BJ (cell line): ENCODE measurements at regions of chr22 and their contacts with region 1.

Region 1: GRCh38 chr22:22848364-22848866 is 39.2 kb upstream of the IGLL5 start:
- DNase-seq: no peak
- H3K4me3 ChIP-seq: no peak overlapping the region
- H3K27me3 ChIP-seq: peaks cover 1% of the 10 kb centered on the region; the same call in 1 of the 2 replicates
- CTCF ChIP-seq: peak; percentile 97

Region 2: GRCh38 chr22:22710719-22711531 is 137.5 kb before region 1 on chr22:
- CTCF ChIA-PET with region 1: no interaction called
- POLR2A ChIA-PET with region 1: no interaction called
- DNase-seq: no peak
- H3K4me3 ChIP-seq: no peak overlapping the region
- H3K27me3 ChIP-seq: no peaks in the 10 kb centered on the region; the same call in 1 of the 2 replicates
- CTCF ChIP-seq: peak; percentile 98

Region 3: DNA sequence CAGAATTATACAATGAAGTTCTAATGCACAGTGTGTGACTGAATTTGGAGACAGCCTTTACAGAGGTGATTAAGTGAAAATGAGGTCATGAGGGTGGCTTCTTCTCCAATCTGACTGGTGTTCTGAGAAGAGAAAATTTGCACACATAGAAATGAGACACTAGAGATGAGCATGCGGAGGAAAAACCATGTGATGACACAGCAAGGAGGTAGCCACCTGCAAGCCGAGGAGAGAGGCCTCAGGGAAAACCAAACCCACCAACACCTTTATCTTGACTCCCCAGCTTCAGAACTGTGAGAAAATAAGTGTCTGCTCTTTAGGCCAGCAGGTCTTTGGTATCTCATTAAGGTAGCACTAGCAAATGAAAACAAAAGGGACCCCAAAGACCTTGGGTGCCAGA is 110.8 kb before region 1 on chr22:
- CTCF ChIA-PET with region 1: no interaction called
- POLR2A ChIA-PET with region 1: no interaction called
- DNase-seq: no peak
- H3K4me3 ChIP-seq: no peak overlapping the region
- H3K27me3 ChIP-seq: peaks cover 3% of the 10 kb centered on the region; the same call in 1 of the 2 replicates
- CTCF ChIP-seq: no peak

Region 4: GRCh38 chr22:22753526-22754267 is 94.7 kb before region 1 on chr22:
- CTCF ChIA-PET with region 1: no interaction called
- POLR2A ChIA-PET with region 1: no interaction called
- DNase-seq: no peak
- H3K4me3 ChIP-seq: no peak overlapping the region
- H3K27me3 ChIP-seq: no peaks in the 10 kb centered on the region
- CTCF ChIP-seq: peak; percentile 69

Region 5: DNA sequence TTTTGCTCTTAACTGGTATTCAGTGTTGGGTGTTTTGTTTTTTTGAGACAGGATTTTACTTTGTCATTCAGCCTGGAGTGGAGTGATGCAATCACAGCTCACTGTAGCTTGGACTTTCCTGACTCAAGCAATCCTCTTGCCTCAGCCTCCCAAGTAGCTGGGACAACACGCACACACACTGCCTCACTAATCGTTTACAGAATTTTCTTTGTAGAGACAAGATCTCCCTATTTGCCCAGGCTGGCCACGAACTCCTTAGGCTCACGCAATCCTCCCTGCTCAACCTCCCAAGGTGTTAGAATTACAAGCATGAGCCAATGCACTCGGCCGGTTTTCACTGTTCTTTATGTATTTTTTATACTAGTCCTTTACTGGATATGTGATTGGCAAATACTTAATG is 11.8 kb before region 1 on chr22:
- CTCF ChIA-PET with region 1: interaction called, 26 read pairs
- POLR2A ChIA-PET with region 1: no interaction called
- DNase-seq: no peak
- H3K4me3 ChIP-seq: no peak overlapping the region
- H3K27me3 ChIP-seq: 0 out of 2 replicates have a peak, but pooled peaks cover 1% of the 10 kb centered on the region
- CTCF ChIP-seq: no peak

Region 6: DNA sequence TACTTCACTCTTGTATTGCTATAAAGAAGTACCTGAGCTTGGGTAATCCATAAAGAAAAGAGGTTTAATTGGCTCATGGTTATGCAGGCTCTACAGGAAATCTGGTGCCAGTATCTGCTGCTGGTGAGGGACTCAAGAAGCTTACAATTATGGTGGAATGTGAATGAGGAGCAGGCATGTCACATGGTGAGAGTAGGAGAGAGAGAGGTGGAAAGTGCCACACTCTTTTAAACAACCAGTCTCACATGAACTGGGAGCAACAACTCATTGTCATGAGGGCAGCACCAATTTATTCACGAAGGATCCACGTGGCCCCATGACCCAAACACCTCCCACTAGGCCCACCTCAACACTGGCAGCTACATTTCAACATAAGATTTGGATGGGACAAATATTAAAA is 14.6 kb after region 1 on chr22:
- CTCF ChIA-PET with region 1: interaction called, 23 read pairs
- POLR2A ChIA-PET with region 1: no interaction called
- DNase-seq: no peak
- H3K4me3 ChIP-seq: no peak overlapping the region
- H3K27me3 ChIP-seq: peaks cover 3% of the 10 kb centered on the region
- CTCF ChIP-seq: no peak

Region 7: DNA sequence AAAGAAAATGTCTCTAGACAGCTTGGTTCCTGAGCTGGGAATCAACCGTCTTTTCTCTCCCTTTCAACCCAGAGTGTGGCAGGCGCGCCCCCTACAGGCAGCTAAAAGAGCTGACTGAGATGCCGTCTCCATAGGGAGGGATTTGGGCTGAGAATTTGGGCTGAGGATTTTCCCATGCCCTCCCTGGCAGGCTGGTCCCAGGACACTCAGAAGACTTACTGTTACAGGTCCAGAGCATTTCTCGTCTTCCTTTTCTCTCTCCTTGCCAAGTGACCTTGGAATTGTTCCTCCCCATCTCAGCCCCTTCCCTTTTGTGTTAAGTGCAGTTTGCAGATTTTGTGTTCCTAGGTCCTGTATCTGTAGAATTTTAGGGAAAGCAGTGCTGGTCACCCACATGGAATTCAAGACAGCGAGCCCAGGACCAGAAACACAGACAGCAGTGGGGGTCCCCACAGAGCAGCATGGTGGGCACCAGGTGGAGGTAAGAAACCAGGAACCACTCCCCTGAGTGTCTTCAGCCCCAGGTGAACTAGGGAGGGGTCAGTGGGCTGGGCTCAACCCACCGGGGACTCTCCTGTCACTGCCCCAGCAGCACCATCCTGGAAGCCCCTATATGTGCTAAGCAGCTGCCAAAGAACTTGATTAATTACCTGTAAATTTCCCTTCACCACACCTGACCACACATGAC is 29.3 kb after region 1 on chr22:
- CTCF ChIA-PET with region 1: interaction called, 35 read pairs
- POLR2A ChIA-PET with region 1: no interaction called
- DNase-seq: no peak
- H3K4me3 ChIP-seq: no peak overlapping the region
- H3K27me3 ChIP-seq: no peaks in the 10 kb centered on the region; the same call in 1 of the 2 replicates
- CTCF ChIP-seq: peak; percentile 79

Region 8: DNA sequence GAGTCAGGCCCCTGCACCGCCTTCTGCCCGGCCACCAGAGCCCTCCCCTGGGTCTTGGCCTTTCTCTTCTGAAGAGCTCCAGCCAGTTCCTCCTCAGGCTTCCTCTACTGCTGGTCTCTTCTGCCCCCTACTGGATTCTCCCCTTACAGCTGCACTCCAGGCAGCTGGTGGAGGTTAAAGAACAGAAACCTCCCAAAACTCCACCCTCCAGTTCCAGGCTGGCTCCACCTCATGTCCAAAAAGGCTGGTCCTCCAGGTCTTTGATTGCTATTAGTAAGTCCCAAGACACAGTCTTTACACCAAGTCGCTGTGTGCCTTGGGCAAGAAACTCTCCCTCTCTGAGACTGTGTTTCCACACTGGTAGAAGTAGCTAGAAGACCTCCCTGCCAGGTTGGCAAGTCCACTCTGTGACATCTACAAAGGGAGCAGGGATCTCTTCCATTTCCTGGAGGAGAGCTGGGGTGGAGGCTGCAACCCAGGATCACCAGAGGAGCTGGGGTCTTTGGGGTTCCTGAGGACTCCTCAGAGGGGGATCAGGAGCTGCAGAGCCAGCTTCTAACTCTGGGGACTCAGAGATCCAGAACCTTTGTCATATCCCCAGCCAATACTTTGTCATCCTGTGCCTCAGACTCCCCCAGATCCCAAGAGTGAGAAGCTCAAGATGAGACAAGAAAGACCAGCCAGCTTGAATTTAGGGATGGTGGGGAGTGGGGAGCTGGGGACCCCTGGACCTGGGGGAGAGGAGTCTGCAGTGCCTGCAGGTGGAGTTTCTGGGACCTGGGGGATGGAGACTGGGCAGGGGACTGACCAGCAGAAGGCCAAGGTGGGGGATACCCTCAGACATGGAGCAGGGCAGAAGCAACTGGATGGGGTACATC is 35.8 kb after region 1 on chr22:
- CTCF ChIA-PET with region 1: interaction called, 35 read pairs
- POLR2A ChIA-PET with region 1: no interaction called
- DNase-seq: no peak
- H3K4me3 ChIP-seq: no peak overlapping the region
- H3K27me3 ChIP-seq: no peaks in the 10 kb centered on the region; the same call in 1 of the 2 replicates
- CTCF ChIP-seq: peak; percentile 57

Region 9: GRCh38 chr22:22928666-22929380 is 80.4 kb after region 1 on chr22:
- CTCF ChIA-PET with region 1: no interaction called
- POLR2A ChIA-PET with region 1: no interaction called
- DNase-seq: no peak
- H3K4me3 ChIP-seq: no peak overlapping the region
- H3K27me3 ChIP-seq: no peaks in the 10 kb centered on the region
- CTCF ChIP-seq: no peak

Region 10: GRCh38 chr22:22948651-22949571 is 100.5 kb after region 1 on chr22:
- CTCF ChIA-PET with region 1: interaction called, 231 read pairs
- POLR2A ChIA-PET with region 1: no interaction called
- DNase-seq: no peak
- H3K4me3 ChIP-seq: no peak overlapping the region
- H3K27me3 ChIP-seq: no peaks in the 10 kb centered on the region
- CTCF ChIP-seq: no peak

Region 11: DNA sequence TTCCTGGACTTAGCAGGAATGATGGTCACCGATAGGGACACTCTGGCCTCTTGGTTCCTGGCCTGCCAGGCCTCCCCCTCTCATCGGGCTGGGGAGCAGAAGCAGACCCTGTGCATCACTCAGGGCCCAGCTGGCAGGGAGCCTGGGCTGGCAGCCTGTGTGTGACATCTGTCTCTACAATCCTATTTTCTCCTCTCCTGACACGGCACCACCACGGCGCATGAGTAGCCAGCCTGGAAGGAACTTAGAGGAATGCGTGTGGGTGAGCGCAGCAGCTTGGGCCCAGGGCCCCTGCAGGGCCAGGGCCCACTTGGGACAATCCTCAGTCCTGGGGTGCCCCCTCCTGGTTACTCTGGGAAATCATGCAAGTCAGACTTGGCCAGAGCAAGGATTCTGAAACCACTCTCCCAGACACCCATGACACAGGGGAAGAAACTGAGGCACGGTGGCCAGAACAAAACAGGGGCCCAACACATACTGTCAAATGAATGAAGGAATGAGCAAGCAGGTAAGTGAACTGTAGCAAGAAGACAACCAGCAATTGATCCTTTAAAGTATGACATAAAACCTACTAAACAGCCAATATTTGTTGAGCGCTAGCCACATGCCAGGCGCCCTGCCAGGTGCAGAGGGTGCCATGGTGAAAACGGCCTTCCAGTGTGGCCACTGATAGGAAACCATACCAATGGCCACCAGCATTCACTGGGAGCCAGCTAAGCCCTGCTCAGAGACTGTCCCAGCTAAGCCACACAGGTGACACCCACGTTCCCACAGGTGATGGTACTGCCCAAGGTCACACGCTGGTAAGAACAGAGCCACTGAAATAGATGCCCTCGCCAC is 280.1 kb after region 1 on chr22:
- CTCF ChIA-PET with region 1: interaction called, 17 read pairs
- POLR2A ChIA-PET with region 1: no interaction called
- DNase-seq: peak; percentile 26
- H3K4me3 ChIP-seq: no peak overlapping the region
- H3K27me3 ChIP-seq: 0 out of 2 replicates have a peak, but pooled peaks cover 2% of the 10 kb centered on the region
- CTCF ChIP-seq: peak; percentile 76